WTC11 (cell line): ENCODE measurements at regions of chr6 and their contacts with region 1.

Region 1: GRCh38 chr6:55276745-55277530 is 50.3 kb upstream of the GFRAL start:
- DNase-seq: peak; percentile 32
- ATAC-seq: peak; percentile 79
- H3K4me3 Mint-ChIP-seq: peak overlapping the region; percentile 39
- H3K27ac Mint-ChIP-seq: peak overlapping the region; percentile 60
- H3K4me1 Mint-ChIP-seq: peaks cover 36% of the 10 kb centered on the region
- H3K27me3 Mint-ChIP-seq: no peaks in the 10 kb centered on the region
- CTCF ChIP-seq: peak; percentile 28; the same call in 1 of the 2 replicates

Region 2: DNA sequence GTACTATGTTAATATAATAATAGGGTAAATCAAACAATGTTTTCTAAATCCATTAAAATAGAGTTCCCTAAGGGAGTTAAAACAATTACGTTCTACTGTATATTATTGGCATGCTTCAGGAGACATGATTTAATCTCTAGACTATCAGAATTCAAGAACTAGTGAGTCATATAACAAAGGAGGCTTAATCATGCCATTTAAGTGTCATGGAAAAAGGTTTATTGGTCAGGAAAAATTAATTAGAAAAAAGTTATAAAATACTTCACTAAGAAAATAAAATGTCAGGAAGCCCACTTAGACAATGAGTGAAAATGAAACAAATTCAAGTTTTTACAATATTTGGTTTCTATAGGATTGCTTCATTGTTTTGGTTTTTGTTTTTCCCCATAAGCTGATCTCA is 67.9 kb before region 1 on chr6:
- CTCF ChIA-PET with region 1: no interaction called
- POLR2A ChIA-PET with region 1: no interaction called
- DNase-seq: no peak
- ATAC-seq: no peak
- H3K4me3 Mint-ChIP-seq: no peak overlapping the region
- H3K27ac Mint-ChIP-seq: no peak overlapping the region
- H3K4me1 Mint-ChIP-seq: no peaks in the 10 kb centered on the region
- H3K27me3 Mint-ChIP-seq: no peaks in the 10 kb centered on the region
- CTCF ChIP-seq: no peak

Region 3: GRCh38 chr6:55227862-55228261 is 49.1 kb before region 1 on chr6:
- CTCF ChIA-PET with region 1: no interaction called
- POLR2A ChIA-PET with region 1: no interaction called
- DNase-seq: no peak
- ATAC-seq: no peak
- H3K4me3 Mint-ChIP-seq: no peak overlapping the region
- H3K27ac Mint-ChIP-seq: no peak overlapping the region
- H3K4me1 Mint-ChIP-seq: peaks cover 9% of the 10 kb centered on the region
- H3K27me3 Mint-ChIP-seq: no peaks in the 10 kb centered on the region
- CTCF ChIP-seq: no peak

Region 4: GRCh38 chr6:55266896-55267295 is 10.0 kb before region 1 on chr6:
- CTCF ChIA-PET with region 1: interaction called, 10 read pairs
- POLR2A ChIA-PET with region 1: no interaction called
- DNase-seq: no peak
- ATAC-seq: no peak
- H3K4me3 Mint-ChIP-seq: no peak overlapping the region
- H3K27ac Mint-ChIP-seq: no peak overlapping the region
- H3K4me1 Mint-ChIP-seq: no peaks in the 10 kb centered on the region
- H3K27me3 Mint-ChIP-seq: no peaks in the 10 kb centered on the region
- CTCF ChIP-seq: no peak

Region 5: GRCh38 chr6:55293116-55293515 is 16.2 kb after region 1 on chr6:
- CTCF ChIA-PET with region 1: interaction called, 10 read pairs
- POLR2A ChIA-PET with region 1: no interaction called
- DNase-seq: no peak
- ATAC-seq: no peak
- H3K4me3 Mint-ChIP-seq: no peak overlapping the region
- H3K27ac Mint-ChIP-seq: no peak overlapping the region
- H3K4me1 Mint-ChIP-seq: no peaks in the 10 kb centered on the region
- H3K27me3 Mint-ChIP-seq: no peaks in the 10 kb centered on the region
- CTCF ChIP-seq: peak; percentile 23; the same call in 1 of the 2 replicates

Region 6: GRCh38 chr6:55304747-55305146 is 27.8 kb after region 1 on chr6:
- CTCF ChIA-PET with region 1: no interaction called
- POLR2A ChIA-PET with region 1: no interaction called
- DNase-seq: no peak
- ATAC-seq: no peak
- H3K4me3 Mint-ChIP-seq: no peak overlapping the region
- H3K27ac Mint-ChIP-seq: no peak overlapping the region
- H3K4me1 Mint-ChIP-seq: no peaks in the 10 kb centered on the region
- H3K27me3 Mint-ChIP-seq: no peaks in the 10 kb centered on the region
- CTCF ChIP-seq: no peak

Region 7: DNA sequence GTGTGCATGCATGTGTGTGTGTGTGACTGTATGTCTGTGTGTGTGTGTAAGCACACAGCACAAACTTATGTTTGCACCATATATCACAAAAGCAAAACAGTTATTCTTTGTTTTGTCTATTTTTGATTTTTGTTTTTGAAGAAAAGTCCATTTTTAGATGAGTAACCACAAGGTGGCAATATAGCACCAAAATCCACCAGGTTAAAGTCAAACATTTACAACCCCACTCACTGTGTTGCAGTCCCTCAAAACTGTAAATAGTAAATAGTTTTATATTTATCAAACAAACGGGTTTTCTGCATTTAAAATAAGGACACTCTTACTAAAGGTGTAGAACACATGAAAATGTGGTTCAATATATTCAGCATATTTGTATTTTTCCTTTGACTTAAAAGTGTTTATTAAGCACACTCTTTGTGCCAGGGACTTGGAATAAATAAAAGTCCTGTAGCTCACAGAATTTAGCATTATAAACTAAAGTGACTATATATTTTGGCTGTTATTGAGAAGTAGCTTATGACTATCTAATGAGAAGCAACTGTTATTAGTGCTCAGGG is 168.8 kb after region 1 on chr6:
- CTCF ChIA-PET with region 1: interaction called, 14 read pairs
- POLR2A ChIA-PET with region 1: no interaction called
- DNase-seq: no peak
- ATAC-seq: no peak
- H3K4me3 Mint-ChIP-seq: no peak overlapping the region
- H3K27ac Mint-ChIP-seq: no peak overlapping the region
- H3K4me1 Mint-ChIP-seq: no peaks in the 10 kb centered on the region
- H3K27me3 Mint-ChIP-seq: no peaks in the 10 kb centered on the region
- CTCF ChIP-seq: 0 out of 2 replicates have a peak, but pooled peaks have one; percentile 30

Region 8: GRCh38 chr6:55941702-55942101 is 664.8 kb after region 1 on chr6:
- CTCF ChIA-PET with region 1: interaction called, 14 read pairs
- POLR2A ChIA-PET with region 1: no interaction called
- DNase-seq: no peak
- ATAC-seq: no peak
- H3K4me3 Mint-ChIP-seq: no peak overlapping the region
- H3K27ac Mint-ChIP-seq: no peak overlapping the region
- H3K4me1 Mint-ChIP-seq: no peaks in the 10 kb centered on the region
- H3K27me3 Mint-ChIP-seq: no peaks in the 10 kb centered on the region
- CTCF ChIP-seq: no peak

Region 9: DNA sequence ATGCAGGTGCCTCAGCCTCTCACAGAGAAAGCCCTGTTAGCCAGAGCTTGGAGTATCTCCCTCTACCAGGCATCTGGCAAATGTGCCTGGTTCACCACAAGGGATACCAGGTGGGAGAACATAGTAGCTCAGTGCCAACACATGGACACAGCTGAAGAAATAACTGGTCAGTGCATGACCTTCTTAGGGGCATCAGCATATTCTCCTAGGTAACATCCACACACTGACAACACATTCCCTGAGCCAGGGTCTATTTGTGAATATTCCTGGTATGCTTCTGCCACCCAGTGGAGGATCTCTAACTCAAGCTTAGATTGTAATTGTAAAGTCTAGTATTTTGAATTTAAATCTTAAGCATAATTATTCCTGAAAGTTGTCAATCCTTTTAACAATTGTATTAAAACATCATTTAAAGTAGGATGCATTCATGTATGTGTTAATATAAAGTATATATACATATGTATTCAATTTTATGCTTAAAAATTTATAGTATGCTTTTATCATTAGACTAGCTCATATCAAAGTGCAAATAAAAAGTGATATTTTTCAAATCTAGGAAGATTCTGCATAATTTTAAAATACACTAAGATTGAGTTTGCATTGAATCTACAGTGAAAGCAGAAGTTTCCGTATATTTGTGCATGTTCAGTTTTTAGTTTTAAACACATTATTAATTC is 1015.7 kb after region 1 on chr6:
- CTCF ChIA-PET with region 1: interaction called, 23 read pairs
- POLR2A ChIA-PET with region 1: no interaction called
- DNase-seq: peak; percentile 25
- ATAC-seq: peak; percentile 94
- H3K4me3 Mint-ChIP-seq: no peak overlapping the region
- H3K27ac Mint-ChIP-seq: no peak overlapping the region
- H3K4me1 Mint-ChIP-seq: peaks cover 3% of the 10 kb centered on the region
- H3K27me3 Mint-ChIP-seq: no peaks in the 10 kb centered on the region
- CTCF ChIP-seq: no peak; the same call in 1 of the 2 replicates